ENCODE measurements at regions of chr22 and their contacts with region 1.

Region 1: GRCh38 chr22:41381329-41382097 is at the start of gene TEF:
- DNase-seq: peak; percentile 97 to 98 (median 98)
- H3K4me3 ChIP-seq: peak within 1 kb of the TSS; percentile 54 to 85 (median 70)
- H3K4me3 Mint-ChIP-seq: peak within 1 kb of the TSS; percentile 80 to 89
- H3K27ac ChIP-seq: peak within 1 kb of the TSS; percentile 87 to 90
- H3K27ac Mint-ChIP-seq: peak within 1 kb of the TSS; percentile 92 to 99 (median 95)
- H3K4me1 ChIP-seq: peaks cover 12 to 18% of the 10 kb centered on the region in 2 donors
- H3K4me1 Mint-ChIP-seq: peaks cover 17% of the 10 kb centered on the region
- H3K27me3 ChIP-seq: no peaks in the 10 kb centered on the region
- H3K27me3 Mint-ChIP-seq: peaks cover 3 to 7% (median 3%) of the 10 kb centered on the region in 3 donors
- CTCF ChIP-seq: no peak
- polyA plus RNA-seq, gene TEF: 0.71 to 1.7 (median 1.1) TPM

Region 2: GRCh38 chr22:41448189-41448808 is 66.8 kb after region 1 on chr22:
- intact Hi-C with region 1: loop called (anchors 10 kb)
- DNase-seq: peak; percentile 96 to 97 (median 97)
- H3K4me3 ChIP-seq: peak overlapping the region; percentile 73 to 99 (median 93)
- H3K4me3 Mint-ChIP-seq: peak overlapping the region; percentile 97 to 98
- H3K27ac ChIP-seq: peak overlapping the region; percentile 89 to 99
- H3K27ac Mint-ChIP-seq: peak overlapping the region; percentile 96 to 99 (median 98)
- H3K4me1 ChIP-seq: peaks cover 19 to 32% of the 10 kb centered on the region in 2 donors
- H3K4me1 Mint-ChIP-seq: peaks cover 26% of the 10 kb centered on the region
- H3K27me3 ChIP-seq: no peaks in the 10 kb centered on the region
- H3K27me3 Mint-ChIP-seq: peaks cover 0 to 2% (median 1%) of the 10 kb centered on the region in 3 donors
- CTCF ChIP-seq: no peak